GM12878 (cell line): ENCODE measurements at regions of chr5 and their contacts with region 1.

Region 1: DNA sequence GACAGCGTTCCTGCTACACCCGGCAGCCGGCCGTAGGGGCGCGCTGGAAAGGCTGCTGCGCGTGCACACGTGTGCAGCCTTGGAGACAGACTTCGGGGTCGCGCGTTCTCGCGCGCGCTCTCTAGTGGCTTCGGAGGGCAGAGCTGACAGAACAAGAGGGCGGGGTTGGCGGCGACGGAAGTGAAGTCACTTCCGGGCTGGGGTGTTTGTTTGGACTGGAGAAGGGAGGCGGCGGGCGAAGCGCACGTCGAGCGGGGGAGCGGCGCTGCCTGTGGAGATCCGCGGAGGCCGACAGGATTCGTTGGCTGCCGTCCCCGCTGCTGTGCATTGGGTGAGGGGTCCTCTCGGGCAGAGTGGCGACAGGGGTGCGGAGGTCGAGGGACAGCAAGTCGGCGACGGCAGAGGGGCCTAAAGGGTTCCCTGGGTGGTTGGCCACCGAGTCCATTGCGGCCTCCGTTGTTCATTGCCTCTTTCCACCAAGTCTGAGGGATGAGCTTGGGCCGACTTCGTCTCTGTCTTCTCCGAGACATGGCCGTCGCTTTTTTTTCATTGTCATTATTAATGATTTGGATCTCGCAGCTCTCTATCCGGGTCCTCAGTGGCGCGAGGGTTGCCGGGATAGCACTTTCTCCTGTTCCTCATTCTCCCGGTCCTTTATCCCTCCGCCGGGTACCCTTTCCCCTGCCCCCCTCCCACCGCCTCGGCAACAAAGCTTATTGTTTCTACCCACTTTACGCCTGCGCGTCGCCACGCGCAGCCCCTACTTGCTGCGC is at the start of gene PAIP2:
- DNase-seq: peak; percentile 90
- ATAC-seq: peak; percentile 89
- H3K4me3 ChIP-seq: peak within 1 kb of the TSS; percentile 93
- H3K27ac ChIP-seq: peak within 1 kb of the TSS; percentile 92
- H3K4me1 ChIP-seq: peaks cover 11% of the 10 kb centered on the region
- H3K27me3 ChIP-seq: no peaks in the 10 kb centered on the region
- CTCF ChIP-seq: peak; percentile 90 to 96 (median 90)
- EP300 ChIP-seq: peak in 1 of 2 experiments; percentile 30; a peak in 1 of 4 replicates
- POLR2A ChIP-seq: peak; percentile 97
- RAD21 ChIP-seq: peak; percentile 58
- polyA plus RNA-seq, gene PAIP2: 100 to 113 TPM

Region 2: DNA sequence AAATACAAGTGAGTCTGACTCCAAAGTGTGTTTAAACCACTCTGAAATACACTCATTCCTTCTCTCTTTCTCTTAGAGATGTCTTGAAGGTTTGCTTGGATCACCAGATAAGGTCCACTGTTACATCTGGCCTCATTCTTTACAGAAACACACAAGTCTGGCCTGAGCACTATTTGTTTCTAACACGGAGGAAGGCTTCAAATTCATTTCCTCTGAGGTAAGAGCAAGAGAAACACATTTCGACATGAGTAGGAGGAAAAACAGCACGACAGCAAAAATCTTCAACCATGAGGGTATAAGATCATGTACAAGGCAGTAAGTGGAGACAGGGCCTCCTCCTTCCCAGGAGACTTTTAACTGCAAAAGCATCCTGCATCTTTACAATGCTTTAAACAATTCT is 151.7 kb before region 1 on chr5:
- CTCF ChIA-PET with region 1: no interaction called
- POLR2A ChIA-PET with region 1: no interaction called
- RAD21 ChIA-PET with region 1: no interaction called
- SMC1A ChIA-PET with region 1: no interaction called
- in situ Hi-C with region 1: no loop called
- intact Hi-C with region 1: no loop called
- DNase-seq: no peak
- ATAC-seq: no peak
- H3K4me3 ChIP-seq: no peak overlapping the region
- H3K27ac ChIP-seq: no peak overlapping the region
- H3K4me1 ChIP-seq: peaks cover 11% of the 10 kb centered on the region
- H3K27me3 ChIP-seq: no peaks in the 10 kb centered on the region
- CTCF ChIP-seq: no peak
- EP300 ChIP-seq: no peak
- POLR2A ChIP-seq: no peak
- RAD21 ChIP-seq: no peak

Region 3: GRCh38 chr5:139385061-139386049 is 43.5 kb after region 1 on chr5:
- CTCF ChIA-PET with region 1: interaction called, 10 read pairs
- POLR2A ChIA-PET with region 1: interaction called, 51 read pairs
- RAD21 ChIA-PET with region 1: interaction called, 42 read pairs
- SMC1A ChIA-PET with region 1: interaction called, 12 read pairs
- in situ Hi-C with region 1: no loop called
- intact Hi-C with region 1: no loop called
- DNase-seq: no peak
- ATAC-seq: peak; percentile 2; the same call in 2 of the 3 replicates
- H3K4me3 ChIP-seq: peak overlapping the region; percentile 17; the same call in 1 of the 2 replicates
- H3K27ac ChIP-seq: peak overlapping the region; percentile 62
- H3K4me1 ChIP-seq: peaks cover 42% of the 10 kb centered on the region
- H3K27me3 ChIP-seq: no peaks in the 10 kb centered on the region
- CTCF ChIP-seq: peak; percentile 9 to 29 (median 9); a peak in 2 of 6 replicates
- EP300 ChIP-seq: no peak
- POLR2A ChIP-seq: no peak
- RAD21 ChIP-seq: 0 out of 2 replicates have a peak, but pooled peaks have one; percentile 17